Left colon (tissue), 2 donors: ENCODE measurements at regions of chr13 and their contacts with region 1.

Region 1: DNA sequence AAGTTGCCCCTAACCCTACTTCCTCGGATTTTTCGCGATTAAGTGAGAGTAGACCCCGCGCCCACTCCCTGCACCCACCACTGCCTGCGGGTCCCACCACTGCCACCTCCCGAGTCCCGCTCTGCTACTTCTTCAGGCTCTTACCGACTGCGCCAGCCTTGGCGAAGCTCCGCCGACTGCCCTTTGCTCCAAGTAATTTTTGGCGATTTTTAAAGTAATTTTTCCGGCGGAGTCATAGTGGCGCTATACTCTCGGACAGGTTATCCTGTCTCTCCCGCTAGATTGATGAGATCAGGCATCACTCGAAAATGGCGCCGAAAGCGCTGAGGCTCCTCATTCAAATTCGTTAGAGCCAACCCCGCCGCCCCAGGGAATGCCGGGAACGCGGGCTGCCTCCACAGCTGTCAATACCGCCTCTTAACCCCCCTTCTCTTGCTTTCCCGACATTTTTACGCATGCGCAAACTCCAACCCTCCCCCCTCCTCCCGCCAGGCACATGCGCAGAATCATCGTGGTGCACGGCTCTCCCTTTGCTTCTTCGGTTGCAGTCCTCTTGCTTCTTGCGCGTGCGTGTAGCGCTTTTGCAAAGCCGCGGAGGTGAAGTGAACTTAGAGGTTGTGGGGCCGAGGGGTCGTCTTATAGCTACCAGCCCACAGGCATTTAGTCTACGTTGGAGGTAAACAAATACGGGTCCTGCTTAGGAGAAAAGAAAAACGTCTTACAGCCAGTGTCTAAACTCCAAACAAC is 66.6 kb downstream of the KCNRG start:
- DNase-seq: peak; percentile 98
- ATAC-seq: peak; percentile 79

Region 2: DNA sequence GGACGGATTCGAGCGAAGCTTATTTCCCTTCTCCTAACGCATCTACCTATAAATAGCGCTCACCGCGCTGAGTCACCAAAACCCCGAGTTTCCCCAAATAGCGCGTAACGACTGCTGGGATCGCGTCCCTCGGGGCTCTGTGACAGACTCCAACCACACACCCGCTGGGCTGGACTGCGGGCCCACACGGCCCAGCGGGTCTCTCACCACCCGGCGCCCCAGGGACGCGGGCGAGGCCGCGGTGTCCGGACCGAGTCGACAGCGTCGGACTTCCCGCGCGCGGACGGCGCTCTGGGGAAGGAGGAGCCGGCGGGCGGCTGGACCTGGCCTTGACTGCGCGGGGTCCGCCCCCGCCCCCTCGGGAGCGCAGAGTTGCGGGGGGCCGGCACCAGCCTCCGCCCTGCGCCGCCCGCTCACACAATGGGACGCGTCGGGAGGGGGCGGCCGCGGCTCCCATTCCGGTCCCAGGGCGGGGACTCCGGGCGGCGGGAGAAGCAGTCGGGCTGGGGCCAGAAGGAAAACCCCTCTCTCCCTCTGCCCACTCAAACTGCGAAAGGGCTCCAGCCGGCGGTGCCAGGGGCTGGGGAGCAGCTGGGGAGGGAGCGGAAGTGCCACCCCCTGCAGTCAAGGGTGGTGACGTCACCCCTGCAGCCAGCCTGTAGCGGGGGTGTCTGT is 42.1 kb after region 1 on chr13:
- intact Hi-C with region 1: loop called (anchors 5 kb)
- DNase-seq: peak; percentile 79 to 96
- ATAC-seq: peak; percentile 75

Region 3: DNA sequence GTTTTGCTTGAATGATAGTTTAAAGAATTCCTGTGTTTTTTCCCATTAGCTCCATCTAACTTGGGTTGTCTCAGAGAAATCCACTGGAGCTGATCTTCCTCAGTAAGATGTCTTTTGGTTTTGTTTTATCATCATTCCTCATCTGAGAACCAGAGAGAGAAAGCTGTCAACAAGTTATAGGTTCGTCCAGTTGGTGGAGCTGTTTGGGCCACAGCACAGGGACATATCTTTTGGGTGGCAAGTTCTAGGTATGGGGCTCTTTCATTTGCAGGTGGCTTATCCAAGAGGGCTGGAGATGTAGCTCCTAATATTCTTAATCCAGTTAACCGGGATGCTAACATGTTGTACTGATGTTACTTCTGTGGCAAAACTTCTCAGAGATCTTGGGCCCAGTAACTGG is 107.6 kb after region 1 on chr13:
- intact Hi-C with region 1: no loop called
- DNase-seq: no peak
- ATAC-seq: no peak